Panc1 (cell line): ENCODE measurements at regions of chr19 and their contacts with region 1.

Region 1: GRCh38 chr19:12564016-12564664 is 12.9 kb upstream of the ZNF564 start:
- DNase-seq: peak; percentile 69
- ATAC-seq: peak; percentile 92
- H3K4me3 ChIP-seq: no peak overlapping the region
- H3K27ac ChIP-seq: no peak overlapping the region
- H3K4me1 ChIP-seq: no peaks in the 10 kb centered on the region
- H3K27me3 ChIP-seq: no peaks in the 10 kb centered on the region
- CTCF ChIP-seq: peak; percentile 92

Region 2: GRCh38 chr19:12544401-12544876 is 19.7 kb before region 1 on chr19:
- CTCF ChIA-PET with region 1: no interaction called
- POLR2A ChIA-PET with region 1: no interaction called
- in situ Hi-C with region 1: no loop called
- intact Hi-C with region 1: no loop called
- DNase-seq: no peak
- ATAC-seq: no peak
- H3K4me3 ChIP-seq: no peak overlapping the region
- H3K27ac ChIP-seq: no peak overlapping the region
- H3K4me1 ChIP-seq: no peaks in the 10 kb centered on the region
- H3K27me3 ChIP-seq: no peaks in the 10 kb centered on the region
- CTCF ChIP-seq: no peak

Region 3: DNA sequence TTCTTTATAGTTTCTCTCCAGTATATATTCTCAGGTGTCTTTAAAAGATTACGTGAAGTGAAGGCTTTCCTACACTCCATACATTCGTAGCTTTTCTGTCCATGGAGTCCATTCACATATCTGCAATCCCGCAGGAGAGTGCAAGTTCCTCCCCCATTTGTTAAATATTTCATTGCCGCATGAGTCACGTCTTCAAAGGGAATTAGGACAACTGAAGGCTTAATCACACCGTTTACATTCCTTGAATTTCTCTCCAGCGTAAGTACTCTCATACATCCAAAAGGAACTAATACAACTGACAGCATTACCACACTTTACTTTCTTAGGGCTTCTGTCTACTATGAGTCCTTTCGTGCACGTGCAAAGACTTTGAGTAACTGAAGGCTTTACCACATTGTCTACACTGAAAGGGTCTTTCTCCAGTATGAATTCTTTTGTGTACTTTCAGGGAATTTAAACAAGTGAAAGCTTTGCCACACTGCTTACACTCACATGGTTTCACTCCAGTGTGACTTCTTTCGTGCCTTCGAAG is 16.1 kb after region 1 on chr19:
- CTCF ChIA-PET with region 1: no interaction called
- POLR2A ChIA-PET with region 1: interaction called, 12 read pairs
- in situ Hi-C with region 1: no loop called
- intact Hi-C with region 1: no loop called
- DNase-seq: no peak
- ATAC-seq: no peak; the same call in 1 of the 2 replicates
- H3K4me3 ChIP-seq: no peak overlapping the region
- H3K27ac ChIP-seq: no peak overlapping the region
- H3K4me1 ChIP-seq: no peaks in the 10 kb centered on the region
- H3K27me3 ChIP-seq: no peaks in the 10 kb centered on the region
- CTCF ChIP-seq: no peak

Region 4: GRCh38 chr19:12669270-12670158 is 105.4 kb after region 1 on chr19:
- CTCF ChIA-PET with region 1: interaction called, 3 read pairs
- POLR2A ChIA-PET with region 1: no interaction called
- in situ Hi-C with region 1: no loop called
- intact Hi-C with region 1: loop called (anchors 10 kb)
- DNase-seq: peak; percentile 53
- ATAC-seq: peak; percentile 59
- H3K4me3 ChIP-seq: peak overlapping the region; percentile 87 to 93
- H3K27ac ChIP-seq: peak overlapping the region; percentile 98
- H3K4me1 ChIP-seq: peaks cover 3% of the 10 kb centered on the region
- H3K27me3 ChIP-seq: no peaks in the 10 kb centered on the region
- CTCF ChIP-seq: no peak

Region 5: DNA sequence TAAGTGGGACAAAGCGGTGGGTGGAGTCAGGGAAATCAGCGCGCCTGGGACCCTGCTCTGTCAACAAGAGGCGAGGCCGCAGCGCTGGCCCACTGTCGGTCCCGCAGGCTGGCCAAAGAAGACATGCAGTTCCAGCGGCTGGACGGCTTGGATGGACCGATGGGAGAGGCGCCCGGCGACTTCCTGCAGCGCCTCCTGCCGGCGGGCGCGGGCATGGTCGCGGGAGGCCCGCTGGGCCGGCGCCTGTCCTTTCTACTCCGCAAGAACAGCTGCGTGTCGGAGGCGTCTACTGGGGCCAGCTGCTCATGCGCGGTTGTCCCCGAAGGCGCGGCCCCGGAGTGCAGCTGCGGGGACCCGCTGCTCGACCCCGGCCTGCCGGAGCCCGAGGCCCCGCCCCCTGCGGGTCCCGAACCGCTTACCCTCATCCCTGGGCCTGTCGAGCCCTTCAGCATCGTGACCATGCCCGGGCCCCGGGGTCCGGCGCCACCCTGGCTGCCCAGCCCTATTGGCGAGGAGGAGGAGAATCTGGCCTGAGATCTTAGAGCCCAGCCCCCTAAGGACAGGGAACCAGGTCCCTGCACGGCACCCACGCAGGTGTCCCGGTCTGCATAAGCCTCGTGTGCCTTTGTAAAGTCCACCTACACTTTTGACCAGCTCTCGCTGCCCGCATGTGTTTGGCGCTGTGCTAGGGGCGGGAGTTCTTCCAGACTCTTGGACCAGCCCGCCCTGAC is 193.6 kb after region 1 on chr19:
- CTCF ChIA-PET with region 1: no interaction called
- POLR2A ChIA-PET with region 1: no interaction called
- in situ Hi-C with region 1: no loop called
- intact Hi-C with region 1: no loop called
- DNase-seq: no peak
- ATAC-seq: peak; percentile 93
- H3K4me3 ChIP-seq: peak overlapping the region; percentile 44 to 55
- H3K27ac ChIP-seq: peak overlapping the region; percentile 59; the same call in 1 of the 2 replicates
- H3K4me1 ChIP-seq: no peaks in the 10 kb centered on the region
- H3K27me3 ChIP-seq: no peaks in the 10 kb centered on the region
- CTCF ChIP-seq: peak; percentile 96

Region 6: GRCh38 chr19:12782229-12783028 is 218.3 kb after region 1 on chr19:
- CTCF ChIA-PET with region 1: no interaction called
- POLR2A ChIA-PET with region 1: no interaction called
- in situ Hi-C with region 1: no loop called
- intact Hi-C with region 1: no loop called
- DNase-seq: no peak
- ATAC-seq: peak; percentile 54
- H3K4me3 ChIP-seq: peak overlapping the region; percentile 45 to 47
- H3K27ac ChIP-seq: peak overlapping the region; percentile 77
- H3K4me1 ChIP-seq: peaks cover 49% of the 10 kb centered on the region
- H3K27me3 ChIP-seq: no peaks in the 10 kb centered on the region
- CTCF ChIP-seq: no peak